PC-9 (cell line): ENCODE measurements at regions of chr13 and their contacts with region 1.

Region 1: GRCh38 chr13:44364348-44365049 is 9.1 kb upstream of the SERP2 start:
- DNase-seq: peak; percentile 63 to 97
- H3K4me3 ChIP-seq: peak overlapping the region; percentile 36; the same call in 1 of the 2 replicates
- H3K27ac ChIP-seq: peak overlapping the region; percentile 96
- H3K4me1 ChIP-seq: peaks cover 86% of the 10 kb centered on the region
- H3K27me3 ChIP-seq: no peaks in the 10 kb centered on the region
- CTCF ChIP-seq: no peak

Region 2: DNA sequence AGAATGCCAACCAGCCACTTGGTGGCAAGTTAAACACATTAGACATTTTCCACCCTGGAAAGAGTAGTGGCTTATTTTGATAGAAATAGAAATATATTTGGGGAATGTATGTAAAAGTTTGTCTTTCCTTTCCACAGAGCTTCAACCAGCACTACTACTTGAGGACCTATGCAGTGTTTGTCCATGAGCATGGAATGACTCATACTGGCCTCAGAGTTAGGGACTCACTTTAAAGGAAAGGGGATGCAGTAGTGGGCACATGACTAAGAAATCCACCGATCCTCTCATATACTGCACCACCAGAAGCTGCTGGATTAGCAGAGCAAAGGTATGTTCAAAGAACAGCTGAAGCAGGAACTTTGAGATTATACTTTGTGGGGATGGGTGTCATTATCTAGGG is 422.2 kb before region 1 on chr13:
- CTCF ChIA-PET with region 1: no interaction called
- POLR2A ChIA-PET with region 1: no interaction called
- intact Hi-C with region 1: no loop called
- DNase-seq: no peak
- H3K4me3 ChIP-seq: no peak overlapping the region
- H3K27ac ChIP-seq: no peak overlapping the region
- H3K4me1 ChIP-seq: 0 out of 2 replicates have a peak, but pooled peaks cover 9% of the 10 kb centered on the region
- H3K27me3 ChIP-seq: no peaks in the 10 kb centered on the region
- CTCF ChIP-seq: no peak

Region 3: DNA sequence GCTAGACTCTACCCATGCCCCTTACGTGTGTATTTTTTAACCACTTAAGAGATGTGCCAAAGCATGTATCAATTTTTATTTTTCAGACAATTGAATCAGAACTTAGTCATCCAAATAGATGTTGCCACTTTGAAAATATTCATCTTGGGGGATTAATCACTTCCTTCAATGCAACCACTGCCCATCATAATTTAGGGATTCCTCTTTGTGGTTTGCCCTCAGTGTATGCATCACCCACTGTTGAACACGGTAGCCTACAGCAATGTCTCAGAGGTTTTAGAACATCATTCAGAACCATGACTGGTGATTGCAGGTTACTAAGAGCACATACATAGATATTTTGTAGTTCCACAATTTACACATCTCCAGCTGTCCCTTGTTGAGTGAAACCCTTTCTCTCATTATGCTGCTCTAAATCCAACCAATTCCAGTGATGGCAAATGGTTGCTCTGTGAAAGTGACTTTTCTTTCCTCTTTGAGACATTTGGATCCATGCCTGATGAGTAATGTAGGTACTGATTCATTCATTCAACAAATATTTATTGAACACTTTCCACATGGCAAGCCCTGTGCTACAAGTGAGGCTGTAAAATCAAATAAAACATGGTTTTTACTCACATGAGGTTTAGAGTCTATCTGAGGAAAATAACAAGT is 51.5 kb before region 1 on chr13:
- CTCF ChIA-PET with region 1: no interaction called
- POLR2A ChIA-PET with region 1: no interaction called
- intact Hi-C with region 1: loop called (anchors 1 kb)
- DNase-seq: peak; percentile 33 to 93
- H3K4me3 ChIP-seq: no peak overlapping the region
- H3K27ac ChIP-seq: peak overlapping the region; percentile 99
- H3K4me1 ChIP-seq: peaks cover 70% of the 10 kb centered on the region
- H3K27me3 ChIP-seq: no peaks in the 10 kb centered on the region
- CTCF ChIP-seq: no peak

Region 4: DNA sequence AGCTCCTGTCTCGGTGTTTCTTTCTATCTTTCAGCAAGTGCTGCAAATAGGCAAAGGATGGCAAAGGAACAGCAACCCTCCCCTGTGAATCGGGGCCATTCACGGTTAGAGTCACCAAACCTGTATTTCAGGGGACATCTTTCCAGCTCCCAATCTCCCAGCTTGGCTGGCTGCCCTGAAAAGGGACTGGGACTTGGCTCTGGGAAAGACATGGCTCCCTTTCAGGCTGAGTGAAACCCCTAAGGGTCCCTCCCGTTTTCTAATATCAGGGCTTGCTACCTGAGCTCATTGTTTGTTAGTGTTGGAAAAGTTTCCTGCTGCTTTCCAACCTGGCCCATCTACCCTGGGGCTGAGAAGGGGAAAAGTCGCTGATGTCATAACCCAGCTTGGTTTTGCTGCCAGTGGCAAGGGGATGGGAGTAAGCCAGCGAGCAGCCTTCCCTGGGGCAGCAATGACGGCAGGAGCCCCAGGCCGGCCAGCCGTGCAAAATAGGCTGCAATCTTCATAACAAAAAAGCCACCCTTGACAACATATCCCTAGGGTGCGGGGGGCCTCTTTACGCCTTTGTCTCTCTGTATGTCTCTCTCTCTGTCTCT is 39.1 kb after region 1 on chr13:
- CTCF ChIA-PET with region 1: no interaction called
- POLR2A ChIA-PET with region 1: no interaction called
- intact Hi-C with region 1: loop called (anchors 1 kb)
- DNase-seq: peak; percentile 61 to 69
- H3K4me3 ChIP-seq: peak overlapping the region; percentile 27; the same call in 1 of the 2 replicates
- H3K27ac ChIP-seq: peak overlapping the region; percentile 67
- H3K4me1 ChIP-seq: peaks cover 49% of the 10 kb centered on the region
- H3K27me3 ChIP-seq: no peaks in the 10 kb centered on the region
- CTCF ChIP-seq: no peak

Region 5: DNA sequence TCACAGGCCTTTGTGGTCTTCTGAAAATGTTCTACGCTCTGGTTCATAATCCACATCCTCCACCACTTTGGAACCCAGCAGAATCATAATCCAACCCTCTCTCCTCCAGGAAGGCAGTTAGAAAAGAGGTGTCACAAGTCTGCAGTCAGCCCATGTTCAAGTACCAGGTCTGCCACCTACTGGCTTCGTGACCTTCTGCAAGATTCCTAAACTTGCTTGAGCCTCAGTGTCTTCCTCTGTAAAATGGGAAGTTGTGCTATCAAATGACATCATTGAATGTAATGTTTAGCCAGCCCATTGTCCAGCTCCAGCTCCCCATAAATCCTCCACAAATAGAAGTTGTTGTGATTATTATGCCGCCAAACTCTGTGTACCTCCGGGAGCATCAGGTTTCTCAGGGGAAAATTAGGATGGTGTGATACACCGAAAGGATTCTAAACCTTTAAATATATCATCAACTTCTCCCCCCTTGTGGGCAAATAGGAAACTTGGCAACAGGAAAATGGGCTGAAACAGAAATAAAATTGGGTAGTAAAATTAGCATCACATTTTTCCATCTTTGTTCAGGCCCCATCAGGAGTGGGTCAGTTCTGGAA is 515.1 kb after region 1 on chr13:
- CTCF ChIA-PET with region 1: no interaction called
- POLR2A ChIA-PET with region 1: no interaction called
- intact Hi-C with region 1: no loop called
- DNase-seq: peak in 1 of 2 experiments; percentile 12
- H3K4me3 ChIP-seq: no peak overlapping the region
- H3K27ac ChIP-seq: no peak overlapping the region
- H3K4me1 ChIP-seq: no peaks in the 10 kb centered on the region
- H3K27me3 ChIP-seq: no peaks in the 10 kb centered on the region
- CTCF ChIP-seq: peak; percentile 65